ENCODE measurements at regions of chr16 and their contacts with region 1.

Region 1: DNA sequence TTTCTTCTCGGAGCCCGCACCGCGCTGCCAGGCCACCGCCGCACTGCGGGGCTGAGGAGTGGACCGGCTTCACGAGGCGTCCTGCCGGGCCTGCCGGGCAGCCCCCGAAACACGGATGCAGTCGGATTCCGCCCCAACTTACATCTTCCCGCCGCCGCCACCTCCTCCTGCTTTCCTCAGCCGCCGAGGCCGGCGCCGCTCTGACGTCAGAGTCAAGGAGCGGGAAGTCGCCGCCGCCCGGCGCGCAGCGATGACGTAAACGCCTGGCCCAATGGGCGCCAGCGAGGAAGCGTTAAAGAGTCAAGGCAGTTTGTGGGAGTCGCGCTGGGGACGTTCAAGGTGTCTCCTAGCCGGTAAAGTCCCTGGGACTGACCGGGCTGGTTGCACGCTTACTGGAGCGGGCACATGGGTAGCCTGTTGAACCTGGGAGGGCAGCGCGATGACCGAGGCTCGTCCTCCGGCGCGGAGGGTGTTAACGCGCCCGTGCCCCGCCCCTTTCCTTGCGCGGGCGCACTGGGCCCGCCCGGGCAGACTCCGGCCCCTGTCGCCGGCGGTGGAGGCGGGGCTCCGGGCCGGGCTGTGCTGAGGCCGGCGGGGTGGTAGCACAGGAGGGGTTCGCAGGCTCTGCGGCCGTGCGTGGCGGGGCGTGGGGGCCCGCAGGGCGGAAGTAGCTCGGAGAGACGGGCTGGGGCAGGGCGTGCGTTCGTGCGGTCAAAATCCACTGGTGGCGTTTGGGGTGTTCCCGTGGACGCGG is at the start of gene RNPS1:
- DNase-seq: peak; percentile 96
- H3K4me3 Mint-ChIP-seq: peak within 1 kb of the TSS; percentile 94
- H3K27ac Mint-ChIP-seq: peak within 1 kb of the TSS; percentile 98
- H3K4me1 Mint-ChIP-seq: peaks cover 41% of the 10 kb centered on the region
- H3K27me3 Mint-ChIP-seq: peaks cover 2% of the 10 kb centered on the region
- total RNA-seq, gene RNPS1: 398 and 403 TPM in 2 replicates

Region 2: DNA sequence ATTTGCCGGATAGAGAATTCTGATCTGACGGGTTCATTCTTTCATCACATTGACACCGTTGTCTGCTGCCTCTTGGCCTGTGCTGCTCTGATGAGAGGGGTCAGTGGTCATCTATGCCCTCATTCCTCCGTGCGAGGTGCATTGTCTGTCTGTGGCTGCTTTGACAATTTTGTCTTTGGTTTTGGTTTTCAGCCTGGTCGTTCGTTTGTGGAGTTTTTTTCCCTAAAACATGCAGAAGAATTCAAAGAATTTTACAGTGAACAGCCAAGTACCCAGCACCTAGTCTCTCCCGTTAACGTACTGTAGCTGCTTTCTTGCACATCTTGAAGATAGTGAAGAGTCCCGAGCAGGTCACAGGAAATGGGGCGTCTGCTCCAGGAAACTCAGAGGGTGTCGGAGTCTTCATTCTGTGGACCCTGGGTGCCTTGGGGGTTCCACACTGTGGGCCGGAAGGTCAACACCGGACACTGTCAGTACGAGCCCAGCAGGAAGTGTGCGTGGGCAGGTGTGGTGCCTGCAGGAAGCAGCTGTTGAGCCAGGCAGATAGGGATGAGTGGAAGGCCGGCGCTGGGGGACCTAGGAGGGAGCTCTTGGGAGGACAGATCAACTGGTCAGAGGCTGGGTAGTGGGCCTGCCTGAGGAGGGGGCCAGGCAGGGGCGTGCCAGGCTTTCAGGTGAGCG is 627.7 kb before region 1 on chr16:
- intact Hi-C with region 1: no loop called
- DNase-seq: no peak
- H3K4me3 Mint-ChIP-seq: no peak overlapping the region
- H3K27ac Mint-ChIP-seq: no peak overlapping the region
- H3K4me1 Mint-ChIP-seq: peaks cover 2% of the 10 kb centered on the region
- H3K27me3 Mint-ChIP-seq: no peaks in the 10 kb centered on the region

Region 3: DNA sequence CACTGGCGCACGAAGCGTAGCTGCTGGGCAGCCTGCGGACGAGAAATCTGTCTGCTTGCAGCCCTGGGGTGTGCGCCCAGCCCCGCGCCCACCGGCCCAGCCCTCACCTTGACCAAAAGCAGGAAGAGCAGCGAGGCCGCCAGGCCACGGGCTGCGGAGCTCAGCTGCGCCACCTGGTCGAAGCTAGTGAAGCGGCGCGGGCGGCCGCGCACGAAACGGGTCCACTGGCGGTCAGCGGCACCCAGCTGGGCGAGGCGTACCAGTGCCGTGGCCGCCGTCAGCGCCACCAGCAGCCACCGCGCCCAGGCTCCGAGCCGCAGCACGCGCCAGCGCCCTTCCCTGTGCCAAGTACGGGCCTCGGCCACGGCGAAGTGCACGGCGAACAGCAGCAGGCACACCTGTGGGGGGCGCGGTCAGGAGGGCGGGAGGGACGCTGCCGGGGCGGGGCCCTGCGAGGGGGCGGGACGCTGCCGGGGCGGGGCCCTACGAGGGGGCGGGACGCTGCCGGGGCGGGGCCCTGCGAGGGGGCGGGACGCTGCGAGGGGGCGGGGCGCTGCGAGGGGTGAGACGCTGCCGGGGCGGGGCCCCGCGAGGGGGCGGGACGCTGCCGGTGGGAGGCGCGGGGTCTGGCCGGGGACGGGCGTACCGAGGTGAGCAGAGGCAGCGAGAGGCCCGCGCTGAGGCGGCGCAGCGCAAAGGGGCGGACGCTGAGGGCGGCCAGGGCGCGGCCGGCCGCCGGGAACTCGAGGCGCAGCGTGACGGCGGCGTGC is 177.1 kb before region 1 on chr16:
- intact Hi-C with region 1: no loop called
- DNase-seq: no peak
- H3K4me3 Mint-ChIP-seq: no peak overlapping the region
- H3K27ac Mint-ChIP-seq: no peak overlapping the region
- H3K4me1 Mint-ChIP-seq: no peaks in the 10 kb centered on the region
- H3K27me3 Mint-ChIP-seq: no peaks in the 10 kb centered on the region

Region 4: GRCh38 chr16:2205104-2205966 is 62.8 kb before region 1 on chr16 and contains the start of gene MLST8:
- intact Hi-C with region 1: loop called (anchors 1 kb)
- DNase-seq: peak; percentile 90
- H3K4me3 Mint-ChIP-seq: peak within 1 kb of the TSS; percentile 86
- H3K27ac Mint-ChIP-seq: peak within 1 kb of the TSS; percentile 68
- H3K4me1 Mint-ChIP-seq: peaks cover 22% of the 10 kb centered on the region
- H3K27me3 Mint-ChIP-seq: peaks cover 13% of the 10 kb centered on the region
- total RNA-seq, gene MLST8: 57.0 and 61.9 TPM in 2 replicates

Region 5: DNA sequence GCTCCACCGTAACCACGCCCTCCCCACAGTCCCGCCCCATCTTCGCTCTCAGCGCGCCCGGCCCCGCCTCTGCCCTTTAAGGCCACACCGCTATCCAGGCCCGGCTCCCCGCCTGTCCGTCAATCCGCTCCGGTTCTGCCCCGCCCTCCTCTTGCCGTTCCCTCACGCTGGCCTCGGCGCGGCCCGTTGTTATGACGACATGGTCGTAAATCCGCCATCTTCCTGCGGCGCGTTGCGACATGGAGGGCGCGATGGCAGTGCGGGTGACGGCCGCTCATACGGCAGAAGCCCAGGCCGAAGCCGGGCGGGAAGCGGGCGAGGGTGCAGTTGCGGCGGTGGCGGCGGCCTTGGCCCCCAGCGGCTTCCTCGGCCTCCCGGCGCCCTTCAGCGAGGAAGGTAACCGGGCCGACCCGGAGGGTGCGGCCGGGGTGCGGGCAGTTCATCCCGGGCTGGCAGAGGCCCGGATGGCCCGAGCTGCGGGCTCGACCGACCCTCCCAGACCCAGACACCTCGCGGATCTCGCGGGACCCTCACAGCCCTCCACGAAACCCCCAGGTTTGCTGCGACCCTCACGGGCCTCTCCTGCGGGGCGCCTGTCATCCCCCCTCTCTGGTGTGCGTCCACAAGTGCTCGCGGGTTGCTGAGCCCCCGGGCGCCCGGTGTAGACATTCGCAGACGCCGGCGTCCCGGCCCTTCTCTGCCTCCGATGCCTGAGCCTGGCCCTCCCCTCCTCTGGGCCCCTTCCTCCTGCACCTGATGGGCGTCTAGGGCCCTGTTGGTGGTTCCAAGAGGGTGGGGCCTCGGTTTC is 44.5 kb before region 1 on chr16 and contains the start of gene E4F1:
- intact Hi-C with region 1: loop called (anchors 1 kb)
- DNase-seq: peak; percentile 99
- H3K4me3 Mint-ChIP-seq: peak within 1 kb of the TSS; percentile 87
- H3K27ac Mint-ChIP-seq: peak within 1 kb of the TSS; percentile 77
- H3K4me1 Mint-ChIP-seq: peaks cover 9% of the 10 kb centered on the region
- H3K27me3 Mint-ChIP-seq: no peaks in the 10 kb centered on the region
- total RNA-seq, gene E4F1: 35.6 and 37.4 TPM in 2 replicates

Region 6: GRCh38 chr16:2296661-2297505 is 28.8 kb after region 1 on chr16:
- intact Hi-C with region 1: no loop called
- DNase-seq: no peak
- H3K4me3 Mint-ChIP-seq: no peak overlapping the region
- H3K27ac Mint-ChIP-seq: no peak overlapping the region
- H3K4me1 Mint-ChIP-seq: no peaks in the 10 kb centered on the region
- H3K27me3 Mint-ChIP-seq: no peaks in the 10 kb centered on the region

Region 7: DNA sequence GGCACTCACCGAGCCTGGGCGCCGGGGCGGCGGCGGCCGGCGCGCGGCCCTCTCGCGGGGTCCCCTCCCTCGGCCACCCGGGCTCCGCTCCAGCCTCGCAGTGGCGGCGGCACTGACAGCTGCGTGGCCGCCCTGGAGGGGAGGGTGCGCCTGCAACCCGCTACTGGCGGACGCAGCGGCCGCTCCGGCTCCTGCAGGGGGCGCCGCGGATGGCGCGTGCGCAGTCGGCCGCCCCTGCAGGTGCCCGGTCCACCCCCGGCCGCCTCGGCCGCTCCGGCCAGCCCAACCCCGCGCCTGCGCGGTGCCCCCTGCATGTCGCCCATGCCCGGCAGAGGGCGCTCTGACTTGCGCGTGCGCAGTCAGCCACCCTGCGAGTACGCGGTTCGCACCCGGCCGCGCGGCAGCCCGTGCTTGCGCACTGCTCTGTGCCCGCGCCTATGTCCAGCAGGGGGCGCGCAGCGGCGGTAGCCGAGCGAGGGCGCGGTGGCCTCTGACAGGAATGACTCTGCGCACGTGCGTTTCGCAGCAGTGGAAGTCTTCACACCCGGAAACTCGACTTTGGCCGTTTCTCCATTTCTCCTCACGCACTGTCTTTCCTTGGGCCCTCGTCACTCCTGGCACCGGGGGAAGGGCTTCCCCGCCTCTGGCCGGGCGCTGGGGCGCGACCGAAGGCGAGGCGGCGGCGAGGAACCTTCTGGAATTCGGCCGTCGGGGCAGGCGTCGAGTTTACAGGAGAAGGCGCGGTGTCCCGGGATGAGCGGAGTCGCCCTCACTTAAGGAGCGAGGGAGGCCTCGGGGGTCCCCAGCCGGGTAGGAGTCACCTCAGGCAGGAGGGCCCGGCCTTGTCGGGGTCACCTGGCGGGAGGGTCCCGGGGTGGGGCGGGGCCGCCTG is 72.7 kb after region 1 on chr16 and contains the start of gene ABCA3:
- intact Hi-C with region 1: loop called (anchors 2 kb)
- DNase-seq: peak; percentile 98
- H3K4me3 Mint-ChIP-seq: peak within 1 kb of the TSS; percentile 90
- H3K27ac Mint-ChIP-seq: peak within 1 kb of the TSS; percentile 7
- H3K4me1 Mint-ChIP-seq: peaks cover 30% of the 10 kb centered on the region
- H3K27me3 Mint-ChIP-seq: peaks cover 33% of the 10 kb centered on the region
- total RNA-seq, gene ABCA3: 9.0 and 10.0 TPM in 2 replicates

Region 8: GRCh38 chr16:2500918-2501750 is 233.0 kb after region 1 on chr16:
- intact Hi-C with region 1: loop called (anchors 1 kb)
- DNase-seq: peak; percentile 67
- H3K4me3 Mint-ChIP-seq: no peak overlapping the region
- H3K27ac Mint-ChIP-seq: no peak overlapping the region
- H3K4me1 Mint-ChIP-seq: no peaks in the 10 kb centered on the region
- H3K27me3 Mint-ChIP-seq: no peaks in the 10 kb centered on the region

Measured in activated T-helper 1 cell treated with anti-CD3 and anti-CD28 coated beads, Interleukin-12 subunit alpha, Interleukin-12 subunit beta, Interleukin-2, Interleukin-4 antibody, amounts not matched to agents 30 ng/mL and 10 ng/mL and 1 ng/mL, durations not matched to agents 14 hours and 24 hours and 36 hours (primary cell).